ENCODE measurements at regions of chr2 and their contacts with region 1.

Region 1: DNA sequence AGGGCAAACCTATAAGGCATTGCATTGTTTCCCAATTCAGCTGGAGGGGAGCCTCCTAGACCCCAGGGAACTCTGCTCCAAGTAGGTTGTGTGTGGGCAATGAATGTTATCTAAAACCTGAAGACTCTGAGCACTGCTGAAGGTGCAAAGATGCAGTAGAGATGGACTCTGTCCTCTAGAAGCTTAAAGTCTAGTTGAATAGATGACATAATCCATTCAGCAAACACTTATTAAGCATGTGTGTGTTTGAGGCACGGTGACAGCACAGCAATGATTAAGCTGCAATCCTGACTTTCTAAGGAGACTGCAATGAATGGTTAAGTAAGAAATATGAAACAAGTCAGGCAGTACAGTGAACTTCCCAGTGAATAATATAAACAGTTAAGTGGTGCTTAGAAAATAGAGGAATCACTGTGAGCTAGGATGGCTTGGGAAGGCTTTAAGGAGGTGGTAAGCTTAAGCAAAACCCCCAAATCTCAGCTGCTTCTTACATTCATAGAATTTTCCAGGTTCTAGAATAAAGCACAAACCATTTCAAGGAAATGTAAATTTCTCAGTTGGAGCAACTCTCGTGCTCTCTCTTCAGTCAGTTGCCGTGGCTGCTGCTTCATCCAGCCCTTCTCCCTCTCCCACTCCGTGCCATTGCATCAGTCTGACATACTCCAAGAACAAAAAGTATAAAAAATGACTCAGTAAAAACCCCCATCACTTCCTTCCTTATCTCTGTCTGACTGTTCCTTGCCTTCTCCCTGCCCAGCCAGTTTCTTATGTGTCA is 19.1 kb downstream of the MXD1 start:
- DNase-seq: no peak
- ATAC-seq: peak; percentile 58; the same call in 1 of the 2 replicates
- H3K4me3 ChIP-seq: no peak overlapping the region
- H3K27ac ChIP-seq: no peak overlapping the region
- H3K4me1 ChIP-seq: 0 out of 2 replicates have a peak, but pooled peaks cover 4% of the 10 kb centered on the region
- H3K27me3 ChIP-seq: no peaks in the 10 kb centered on the region
- CTCF ChIP-seq: no peak

Region 2: DNA sequence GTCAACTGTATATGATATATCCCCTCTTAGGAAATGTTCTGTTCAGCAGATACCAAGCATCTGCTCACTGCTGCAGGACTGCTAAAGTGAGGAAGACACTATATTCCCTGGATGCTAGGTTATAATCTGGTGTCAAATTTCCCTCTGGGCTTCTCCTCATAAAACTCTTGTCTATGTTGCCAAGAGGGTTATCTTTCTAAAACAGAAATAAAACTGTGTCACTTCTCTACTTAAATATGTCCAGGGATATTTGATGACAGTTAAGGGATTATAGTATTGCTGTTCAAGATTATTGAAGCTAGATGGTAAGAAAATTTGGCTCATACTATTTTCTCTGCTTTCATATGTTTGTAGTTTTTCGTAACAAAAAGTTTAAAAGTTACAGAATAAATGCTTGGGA is 70.7 kb before region 1 on chr2:
- CTCF ChIA-PET with region 1: no interaction called
- POLR2A ChIA-PET with region 1: no interaction called
- in situ Hi-C with region 1: no loop called
- intact Hi-C with region 1: no loop called
- DNase-seq: no peak
- ATAC-seq: no peak
- H3K4me3 ChIP-seq: no peak overlapping the region
- H3K27ac ChIP-seq: no peak overlapping the region
- H3K4me1 ChIP-seq: no peaks in the 10 kb centered on the region
- H3K27me3 ChIP-seq: no peaks in the 10 kb centered on the region
- CTCF ChIP-seq: no peak

Region 3: DNA sequence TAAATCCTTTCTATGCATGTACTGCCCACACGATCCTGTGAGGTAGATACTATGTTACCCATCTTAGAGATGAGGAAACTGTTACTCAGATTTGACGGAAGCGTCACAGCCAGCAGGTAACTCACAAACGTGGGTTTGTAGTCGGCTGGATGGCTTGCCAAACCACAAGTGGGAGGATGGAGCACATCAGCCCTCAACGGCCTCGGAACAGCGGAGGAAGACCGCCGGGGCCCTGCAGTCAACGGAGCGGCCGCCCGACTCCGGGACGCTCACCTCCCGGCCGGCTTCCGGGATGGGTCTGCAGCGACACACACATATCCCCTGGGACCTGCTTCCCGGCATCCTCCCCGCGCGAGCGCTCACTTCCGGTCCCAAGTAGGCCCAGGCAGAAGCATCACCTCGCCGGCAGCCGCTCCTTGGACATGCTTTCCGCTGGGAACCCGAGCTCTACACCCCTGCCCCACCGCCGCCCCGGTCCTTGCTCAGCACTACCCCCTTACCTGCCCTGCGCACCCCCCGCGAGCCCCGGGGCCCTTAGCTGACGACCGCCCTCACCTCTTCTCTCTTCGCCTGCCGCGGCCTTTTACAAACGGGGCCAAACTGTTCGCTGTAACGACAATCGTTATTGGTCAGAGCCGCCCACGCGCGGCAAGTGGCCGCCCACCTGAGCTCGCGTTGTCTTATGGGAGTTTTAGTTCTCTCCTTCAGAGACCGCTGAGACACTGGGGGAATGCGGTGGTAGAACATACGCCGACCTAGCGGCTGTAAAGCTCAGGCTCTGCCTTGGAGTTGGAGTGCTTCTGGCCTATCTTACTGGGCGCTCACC is 256.6 kb after region 1 on chr2 and contains the start of gene C2orf42:
- CTCF ChIA-PET with region 1: no interaction called
- POLR2A ChIA-PET with region 1: interaction called, 11 read pairs
- in situ Hi-C with region 1: no loop called
- intact Hi-C with region 1: no loop called
- DNase-seq: peak; percentile 94
- ATAC-seq: peak; percentile 98
- H3K4me3 ChIP-seq: peak within 1 kb of the TSS; percentile 62 to 79
- H3K27ac ChIP-seq: peak within 1 kb of the TSS; percentile 92
- H3K4me1 ChIP-seq: no peaks in the 10 kb centered on the region
- H3K27me3 ChIP-seq: no peaks in the 10 kb centered on the region
- CTCF ChIP-seq: no peak
- total RNA-seq, gene C2orf42: 15.4 TPM

Region 4: DNA sequence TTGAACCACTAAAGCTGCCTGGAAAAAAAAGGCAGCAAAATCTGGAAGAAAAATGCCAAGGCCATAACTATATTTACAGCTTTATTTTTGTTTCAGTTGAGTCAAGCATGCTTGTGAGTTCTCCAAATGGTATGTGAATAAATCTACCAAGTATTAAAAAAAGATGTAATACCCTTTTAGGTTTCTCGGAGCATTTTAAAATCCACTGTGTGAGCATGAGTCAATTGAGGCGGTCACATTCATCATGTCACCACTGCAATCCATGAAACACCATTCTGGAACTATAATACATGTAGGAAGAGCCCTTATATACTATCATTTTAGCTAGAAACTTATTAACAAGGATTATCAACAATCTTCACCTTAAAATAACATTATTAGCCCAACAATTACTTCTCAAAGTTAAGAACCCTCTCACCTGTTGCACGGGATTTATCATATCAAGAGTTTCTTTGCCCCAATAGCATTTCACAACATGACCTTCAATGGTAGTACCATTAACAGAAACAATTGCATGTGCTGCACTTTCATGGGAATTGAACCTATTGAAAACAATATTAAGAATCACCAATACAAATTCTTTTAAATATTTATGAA is 281.0 kb after region 1 on chr2:
- CTCF ChIA-PET with region 1: no interaction called
- POLR2A ChIA-PET with region 1: no interaction called
- in situ Hi-C with region 1: no loop called
- intact Hi-C with region 1: no loop called
- DNase-seq: no peak
- ATAC-seq: no peak
- H3K4me3 ChIP-seq: no peak overlapping the region
- H3K27ac ChIP-seq: no peak overlapping the region
- H3K4me1 ChIP-seq: peaks cover 4% of the 10 kb centered on the region; the same call in 1 of the 2 replicates
- H3K27me3 ChIP-seq: no peaks in the 10 kb centered on the region
- CTCF ChIP-seq: no peak